HAP-1 (cell line): ENCODE measurements at regions of chr1 and their contacts with region 1.

Region 1: GRCh38 chr1:68470388-68470970 is 20.7 kb upstream of the RPE65 start:
- DNase-seq: no peak
- H3K4me3 ChIP-seq: no peak overlapping the region
- H3K4me1 ChIP-seq: peaks cover 11% of the 10 kb centered on the region
- H3K27me3 ChIP-seq: no peaks in the 10 kb centered on the region

Region 2: GRCh38 chr1:68384872-68385390 is 85.5 kb before region 1 on chr1:
- in situ Hi-C with region 1: no loop called
- DNase-seq: no peak
- H3K4me3 ChIP-seq: no peak overlapping the region
- H3K4me1 ChIP-seq: no peaks in the 10 kb centered on the region; the same call in 1 of the 2 replicates
- H3K27me3 ChIP-seq: no peaks in the 10 kb centered on the region

Region 3: DNA sequence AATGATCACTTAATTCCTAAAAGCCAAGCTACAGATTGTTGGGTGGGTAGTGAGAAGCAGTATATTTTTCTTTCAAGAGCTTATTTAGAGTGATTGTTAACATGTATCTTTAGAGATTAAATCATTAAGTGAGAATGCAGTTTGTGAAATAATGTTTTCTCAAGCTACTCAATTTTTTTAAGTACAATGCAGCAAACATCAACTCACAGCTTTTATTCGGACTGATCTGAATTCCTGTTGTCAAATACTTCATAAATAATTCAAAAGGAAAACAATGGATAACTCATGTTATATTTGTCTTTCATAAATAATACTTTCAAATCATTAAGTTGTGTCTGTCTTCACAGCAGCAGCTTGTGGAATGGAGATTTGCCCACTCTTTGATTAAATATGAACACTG is 297.5 kb after region 1 on chr1:
- in situ Hi-C with region 1: no loop called
- DNase-seq: no peak
- H3K4me3 ChIP-seq: no peak overlapping the region
- H3K4me1 ChIP-seq: no peaks in the 10 kb centered on the region
- H3K27me3 ChIP-seq: no peaks in the 10 kb centered on the region

Region 4: DNA sequence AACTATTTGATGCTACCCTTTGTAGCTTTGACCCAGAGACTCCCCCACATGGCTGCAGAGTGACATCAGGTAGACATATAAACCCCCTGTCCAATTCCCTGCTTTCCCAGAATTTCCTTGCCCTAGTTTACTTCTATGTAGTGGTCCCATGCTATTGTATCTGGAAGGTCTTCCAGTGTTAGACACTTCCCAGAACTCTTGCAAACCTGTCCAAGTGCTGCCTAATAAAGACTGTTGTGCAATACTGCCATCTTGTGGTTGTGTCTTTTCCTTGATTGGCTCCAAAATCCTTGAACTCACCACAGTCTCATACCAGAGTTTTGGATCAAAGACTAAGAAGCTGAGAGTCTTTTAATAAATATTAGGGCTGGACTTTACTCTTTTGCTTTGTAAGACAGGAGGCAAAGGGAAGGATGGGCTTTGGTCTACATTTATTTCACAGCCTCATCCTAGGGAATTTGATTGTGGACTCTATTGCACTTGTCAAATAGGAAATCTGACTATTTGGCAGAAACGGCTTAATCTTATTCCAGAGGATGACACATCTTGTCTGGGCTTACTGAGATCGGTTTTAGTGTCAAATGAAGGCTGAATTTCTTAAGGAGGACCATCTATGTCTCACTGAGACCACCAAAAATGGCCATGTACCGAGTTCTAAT is 1267.2 kb after region 1 on chr1:
- in situ Hi-C with region 1: loop called (anchors 25 kb)
- DNase-seq: peak; percentile 64 to 73
- H3K4me3 ChIP-seq: no peak overlapping the region
- H3K4me1 ChIP-seq: peaks cover 14% of the 10 kb centered on the region
- H3K27me3 ChIP-seq: no peaks in the 10 kb centered on the region